ENCODE measurements at regions of chr19 and their contacts with region 1.

Region 1: DNA sequence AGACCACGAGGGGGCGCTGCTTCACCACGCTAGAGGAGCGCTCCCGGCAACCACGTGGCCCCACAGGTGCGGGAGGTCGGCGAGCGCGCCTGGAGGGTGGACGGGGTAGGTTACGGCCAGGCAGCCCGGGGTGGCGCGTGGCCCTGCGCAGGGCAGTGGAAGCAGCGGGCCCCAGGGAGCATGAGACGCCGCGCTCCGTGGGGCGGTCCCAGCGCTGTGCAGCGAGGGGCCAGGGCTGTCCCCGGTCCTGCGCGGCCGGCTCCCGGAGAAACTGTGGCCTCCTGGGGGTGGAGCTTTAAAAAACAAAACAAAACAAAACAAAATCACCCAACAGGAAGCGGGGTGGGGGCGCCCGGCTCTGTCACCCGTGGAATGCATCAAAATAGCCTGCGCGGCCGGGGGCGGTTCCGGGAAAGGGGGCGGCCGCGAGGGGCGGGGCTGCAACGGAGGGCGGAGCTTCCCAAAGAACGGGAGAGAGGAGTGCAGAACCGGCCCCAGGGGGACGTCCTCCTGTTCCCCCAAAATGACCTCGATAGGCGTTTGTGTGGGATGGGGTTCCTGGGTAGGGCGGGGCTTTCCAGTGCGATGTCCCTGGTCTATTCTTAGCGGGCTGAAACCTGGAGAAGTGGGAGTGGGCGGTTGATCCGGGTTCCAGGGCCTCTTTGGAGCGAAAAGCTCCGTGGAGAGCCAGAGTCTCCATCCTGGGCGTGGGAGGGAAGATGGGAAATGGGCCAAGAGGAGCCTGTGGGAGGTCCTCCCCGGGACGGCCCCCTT is 27.3 kb downstream of the NUMBL start:
- DNase-seq: peak; percentile 95
- ATAC-seq: peak; percentile 91
- H3K4me3 Mint-ChIP-seq: peak overlapping the region; percentile 85
- H3K27ac Mint-ChIP-seq: peak overlapping the region; percentile 76
- H3K4me1 Mint-ChIP-seq: peaks cover 17% of the 10 kb centered on the region
- H3K27me3 Mint-ChIP-seq: no peaks in the 10 kb centered on the region
- CTCF ChIP-seq: peak; percentile 68

Region 2: DNA sequence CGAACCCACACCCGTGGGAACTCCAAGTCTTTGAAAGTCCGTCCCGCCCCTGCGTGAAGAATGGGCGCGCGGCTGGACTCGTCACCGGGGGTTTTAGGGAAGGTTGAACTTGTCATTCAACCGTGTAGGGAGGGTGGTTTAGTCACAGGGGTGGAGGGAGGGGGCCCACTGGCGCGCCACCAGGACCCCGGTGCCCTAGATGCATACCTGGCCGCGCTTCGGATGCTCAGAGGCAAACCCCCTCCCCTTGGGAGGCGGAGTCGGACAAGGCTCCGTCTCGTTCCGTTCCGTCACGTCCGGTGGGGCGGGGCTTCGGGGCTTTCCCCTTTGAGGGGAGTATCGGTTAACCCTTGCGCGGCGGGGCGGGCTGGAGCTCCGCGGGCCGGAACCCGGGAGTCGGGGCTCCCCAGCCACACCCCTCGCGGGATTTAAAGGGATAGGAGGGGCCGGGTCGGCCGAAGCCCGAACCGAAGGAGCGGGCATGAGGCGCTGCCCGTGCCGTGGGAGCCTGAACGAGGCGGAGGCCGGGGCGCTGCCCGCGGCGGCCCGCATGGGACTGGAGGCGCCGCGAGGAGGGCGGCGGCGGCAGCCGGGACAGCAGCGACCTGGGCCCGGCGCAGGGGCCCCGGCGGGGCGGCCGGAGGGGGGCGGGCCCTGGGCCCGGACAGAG is 53.7 kb after region 1 on chr19 and contains the starts of genes COQ8B and ITPKC:
- CTCF ChIA-PET with region 1: interaction called, 8 read pairs
- POLR2A ChIA-PET with region 1: interaction called, 10 read pairs
- intact Hi-C with region 1: loop called (anchors 1 kb)
- DNase-seq: peak; percentile 100
- ATAC-seq: peak; percentile 70
- H3K4me3 Mint-ChIP-seq: peak within 1 kb of the TSS; percentile 90
- H3K27ac Mint-ChIP-seq: peak within 1 kb of the TSS; percentile 95
- H3K4me1 Mint-ChIP-seq: peaks cover 63% of the 10 kb centered on the region
- H3K27me3 Mint-ChIP-seq: no peaks in the 10 kb centered on the region
- CTCF ChIP-seq: no peak
- total RNA-seq, gene COQ8B: 34.4 and 38.5 TPM in 2 replicates
- total RNA-seq, gene ITPKC: 13.0 and 13.3 TPM in 2 replicates

Region 3: GRCh38 chr19:40768869-40769268 is 105.8 kb after region 1 on chr19:
- CTCF ChIA-PET with region 1: no interaction called
- POLR2A ChIA-PET with region 1: no interaction called
- intact Hi-C with region 1: no loop called
- DNase-seq: no peak
- ATAC-seq: no peak
- H3K4me3 Mint-ChIP-seq: no peak overlapping the region
- H3K27ac Mint-ChIP-seq: no peak overlapping the region
- H3K4me1 Mint-ChIP-seq: peaks cover 9% of the 10 kb centered on the region
- H3K27me3 Mint-ChIP-seq: no peaks in the 10 kb centered on the region
- CTCF ChIP-seq: no peak

Region 4: GRCh38 chr19:40798223-40798996 is 135.3 kb after region 1 on chr19:
- CTCF ChIA-PET with region 1: interaction called, 4 read pairs
- POLR2A ChIA-PET with region 1: interaction called, 13 read pairs
- intact Hi-C with region 1: no loop called
- DNase-seq: peak; percentile 57
- ATAC-seq: peak; percentile 38
- H3K4me3 Mint-ChIP-seq: peak overlapping the region; percentile 95
- H3K27ac Mint-ChIP-seq: peak overlapping the region; percentile 99
- H3K4me1 Mint-ChIP-seq: peaks cover 62% of the 10 kb centered on the region
- H3K27me3 Mint-ChIP-seq: no peaks in the 10 kb centered on the region
- CTCF ChIP-seq: no peak

Region 5: GRCh38 chr19:40813182-40813958 is 150.3 kb after region 1 on chr19:
- CTCF ChIA-PET with region 1: interaction called, 54 read pairs
- POLR2A ChIA-PET with region 1: interaction called, 5 read pairs
- intact Hi-C with region 1: no loop called
- DNase-seq: no peak
- ATAC-seq: no peak
- H3K4me3 Mint-ChIP-seq: no peak overlapping the region
- H3K27ac Mint-ChIP-seq: no peak overlapping the region
- H3K4me1 Mint-ChIP-seq: peaks cover 47% of the 10 kb centered on the region
- H3K27me3 Mint-ChIP-seq: no peaks in the 10 kb centered on the region
- CTCF ChIP-seq: no peak

Region 6: GRCh38 chr19:40974633-40975037 is 311.5 kb after region 1 on chr19:
- CTCF ChIA-PET with region 1: no interaction called
- POLR2A ChIA-PET with region 1: no interaction called
- intact Hi-C with region 1: loop called (anchors 2 kb)
- DNase-seq: peak; percentile 46
- ATAC-seq: peak; percentile 62
- H3K4me3 Mint-ChIP-seq: no peak overlapping the region
- H3K27ac Mint-ChIP-seq: no peak overlapping the region
- H3K4me1 Mint-ChIP-seq: no peaks in the 10 kb centered on the region
- H3K27me3 Mint-ChIP-seq: peaks cover 29% of the 10 kb centered on the region
- CTCF ChIP-seq: no peak

Region 7: GRCh38 chr19:41144403-41144802 is 481.3 kb after region 1 on chr19:
- CTCF ChIA-PET with region 1: interaction called, 14 read pairs
- POLR2A ChIA-PET with region 1: no interaction called
- intact Hi-C with region 1: no loop called
- DNase-seq: peak; percentile 42
- ATAC-seq: peak; percentile 64
- H3K4me3 Mint-ChIP-seq: no peak overlapping the region
- H3K27ac Mint-ChIP-seq: no peak overlapping the region
- H3K4me1 Mint-ChIP-seq: no peaks in the 10 kb centered on the region
- H3K27me3 Mint-ChIP-seq: peaks cover 9% of the 10 kb centered on the region
- CTCF ChIP-seq: peak; percentile 63

Measured in activated B cell treated with CpG ODN at 0.5 μM for 24 hours (primary cell).